ENCODE measurements at regions of chr2 and their contacts with region 1.

Region 1: GRCh38 chr2:187581125-187581896 is 27.1 kb upstream of the TFPI start:
- DNase-seq: no peak
- H3K4me3 ChIP-seq: no peak overlapping the region
- CTCF ChIP-seq: peak; percentile 50

Region 2: GRCh38 chr2:187493877-187494568 is 87.3 kb before region 1 on chr2:
- CTCF ChIA-PET with region 1: interaction called, 718 read pairs
- POLR2A ChIA-PET with region 1: no interaction called
- DNase-seq: no peak
- H3K4me3 ChIP-seq: no peak overlapping the region
- CTCF ChIP-seq: no peak

Region 3: DNA sequence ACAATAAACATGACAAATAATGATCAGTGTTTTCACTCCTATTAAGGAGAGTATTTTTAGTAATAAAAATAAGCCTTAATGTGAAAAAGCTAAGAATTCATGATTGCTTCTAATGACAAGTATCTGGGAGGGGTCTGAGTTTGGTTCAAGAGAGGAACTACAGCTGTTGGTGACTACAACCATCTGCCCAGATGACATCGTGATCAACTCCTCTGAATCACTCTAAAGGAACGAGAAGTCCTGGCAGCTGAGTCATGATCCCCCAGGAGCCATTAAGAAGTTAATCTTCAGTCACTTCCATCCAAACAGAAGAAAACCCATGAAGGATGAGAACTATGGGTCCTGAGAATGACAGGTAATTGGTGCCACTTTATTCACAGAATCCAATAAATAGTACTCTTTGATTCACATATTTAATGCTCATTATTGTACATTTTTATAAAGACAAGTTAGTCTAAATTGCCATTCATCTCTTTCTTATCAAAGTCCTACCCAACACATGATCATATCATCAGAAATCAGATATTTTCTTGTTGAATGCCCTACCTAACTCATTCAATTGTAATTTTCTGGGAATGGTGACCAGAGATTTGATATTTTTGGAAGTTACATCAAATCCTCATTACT is 33.8 kb before region 1 on chr2:
- CTCF ChIA-PET with region 1: interaction called, 44 read pairs
- POLR2A ChIA-PET with region 1: no interaction called
- DNase-seq: peak; percentile 81
- H3K4me3 ChIP-seq: no peak overlapping the region
- CTCF ChIP-seq: no peak

Region 4: DNA sequence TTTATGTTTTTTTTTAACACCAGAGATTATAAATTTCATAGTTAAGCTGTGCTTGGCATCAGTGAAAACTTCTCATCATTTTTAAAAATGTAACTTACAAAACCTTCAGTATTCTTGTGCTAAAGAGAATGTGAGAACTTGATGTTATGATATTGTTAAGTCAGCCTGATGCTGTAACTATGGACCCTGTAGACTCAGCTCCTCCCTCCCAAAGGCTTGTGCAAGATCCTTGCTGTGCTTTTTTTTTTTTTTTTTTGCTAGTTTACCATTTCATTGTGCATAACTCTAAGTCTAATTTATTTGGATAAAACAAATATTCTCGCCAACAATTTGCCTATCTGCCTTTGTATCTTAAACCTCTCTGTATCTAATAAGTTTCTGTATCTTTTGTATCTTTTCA is 14.2 kb before region 1 on chr2:
- CTCF ChIA-PET with region 1: interaction called, 16 read pairs
- POLR2A ChIA-PET with region 1: no interaction called
- DNase-seq: peak; percentile 40
- H3K4me3 ChIP-seq: no peak overlapping the region
- CTCF ChIP-seq: no peak

Region 5: DNA sequence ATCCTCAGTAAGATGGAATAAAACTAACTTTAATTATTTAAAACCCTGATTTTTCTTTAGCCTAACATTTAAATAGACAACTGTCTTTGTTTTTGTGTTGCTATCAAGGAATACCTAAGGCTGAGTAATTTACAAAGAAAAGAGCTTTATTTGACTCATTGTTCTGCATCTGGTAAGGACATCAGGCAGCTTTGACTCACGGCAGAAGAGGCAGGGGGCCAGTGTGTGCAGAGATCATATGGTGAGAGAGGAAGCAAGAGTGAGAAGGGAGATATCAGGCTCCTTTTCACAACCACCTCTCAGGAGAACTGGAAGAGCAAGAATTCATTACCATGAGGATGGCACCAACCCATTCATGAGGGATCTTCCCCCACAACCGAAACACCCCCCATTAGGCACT is 37.5 kb after region 1 on chr2:
- CTCF ChIA-PET with region 1: interaction called, 20 read pairs
- POLR2A ChIA-PET with region 1: no interaction called
- DNase-seq: no peak
- H3K4me3 ChIP-seq: no peak overlapping the region
- CTCF ChIP-seq: no peak

Region 6: DNA sequence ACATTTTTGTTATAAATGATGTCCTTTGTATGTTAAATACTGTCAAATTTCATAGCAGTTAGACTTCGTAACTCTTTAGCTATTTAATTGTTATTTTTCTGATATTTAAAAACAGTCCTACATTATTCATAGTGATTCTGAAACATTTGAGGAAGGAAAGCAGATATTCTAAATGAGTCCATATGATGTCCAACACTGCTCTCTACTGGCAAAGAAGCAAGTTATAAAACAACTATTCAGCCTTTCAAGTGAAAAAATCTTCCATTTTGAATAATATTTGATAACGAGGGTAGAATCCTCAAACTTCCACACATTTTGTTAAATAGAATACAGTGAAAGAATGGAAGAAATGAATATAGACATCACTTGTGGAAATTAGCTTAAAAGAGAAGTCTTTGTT is 931.1 kb after region 1 on chr2:
- CTCF ChIA-PET with region 1: interaction called, 38 read pairs
- POLR2A ChIA-PET with region 1: no interaction called
- DNase-seq: no peak
- H3K4me3 ChIP-seq: no peak overlapping the region
- CTCF ChIP-seq: peak; percentile 17

Measured in AG04449 (cell line).